ENCODE measurements at regions of chr20 and their contacts with region 1.

Region 1: DNA sequence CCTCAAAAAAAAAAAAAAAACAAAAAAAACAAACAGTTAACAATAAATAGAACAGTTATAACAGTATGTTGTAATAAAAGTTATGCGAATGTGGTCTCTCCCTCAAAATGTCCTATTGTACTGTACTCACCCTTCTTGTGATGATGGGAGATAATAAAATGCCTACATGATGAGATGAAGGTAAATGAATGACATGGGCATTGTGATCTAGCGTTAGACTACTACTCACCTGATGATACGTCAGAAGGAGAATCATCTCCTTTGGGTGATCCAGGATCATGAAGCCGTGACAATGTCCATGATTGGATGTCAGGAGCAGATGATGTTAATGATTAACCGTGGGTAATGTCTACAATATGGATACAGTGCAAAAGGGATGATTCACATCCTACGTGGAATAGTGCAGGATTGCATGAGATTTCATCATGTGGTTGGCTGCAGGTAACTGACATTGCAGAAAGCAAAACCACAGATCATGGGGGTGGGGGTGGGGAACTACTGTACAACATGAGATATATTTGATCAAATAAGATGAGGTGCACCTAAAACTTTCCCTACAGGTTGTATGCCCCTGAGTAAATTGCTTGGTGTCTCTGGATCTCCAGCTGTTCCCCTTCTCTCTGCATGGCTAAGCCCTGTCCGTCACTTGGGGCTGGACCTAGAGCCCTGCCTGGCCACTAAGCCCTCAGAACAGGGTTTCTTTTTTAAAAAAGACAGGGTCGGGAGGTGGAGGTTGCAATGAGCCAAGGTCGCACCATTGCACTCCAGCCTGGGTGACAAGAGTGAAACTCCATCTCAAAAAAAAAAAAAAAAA is 6.2 kb upstream of the RBCK1 start:
- DNase-seq: no peak

Region 2: DNA sequence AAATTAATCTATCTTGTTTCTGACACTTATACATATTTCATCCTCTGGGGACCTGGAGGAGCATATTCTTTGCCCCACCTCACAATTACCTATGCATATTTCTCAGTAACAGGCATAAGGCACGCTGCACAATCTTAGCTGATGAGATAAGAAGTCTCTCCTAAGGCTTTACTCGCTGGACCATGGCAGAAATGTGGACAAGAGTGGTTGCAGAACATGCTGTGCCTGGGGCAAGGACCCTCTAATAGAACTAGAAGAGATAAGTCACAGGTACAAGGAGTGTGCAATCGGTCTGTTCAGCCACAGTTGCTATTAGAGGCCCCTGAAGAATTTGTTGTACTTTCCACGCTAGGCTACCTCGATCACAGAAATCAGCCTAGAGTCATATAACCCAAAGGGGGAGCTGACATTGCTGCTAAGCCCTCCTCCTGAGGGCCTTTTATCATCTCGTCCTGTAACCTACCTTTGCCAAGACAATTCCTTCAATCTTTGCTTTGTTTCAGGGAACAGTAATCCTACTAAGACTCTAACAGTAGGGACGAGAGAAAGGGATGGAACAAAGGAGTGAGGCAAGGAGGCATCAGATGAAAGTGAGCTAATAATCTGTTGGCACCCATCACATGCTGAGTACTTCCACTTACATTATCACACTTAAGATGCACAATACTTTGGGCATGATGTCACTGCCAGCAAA is 190.9 kb before region 1 on chr20:
- intact Hi-C with region 1: no loop called
- DNase-seq: no peak

Region 3: GRCh38 chr20:469746-470483 is 68.0 kb after region 1 on chr20:
- intact Hi-C with region 1: loop called (anchors 5 kb)
- DNase-seq: no peak